Activated naive CD4-positive, alpha-beta T cell treated with anti-CD3 and anti-CD28 coated beads for 36 hours (primary cell): ENCODE measurements at regions of chrX and their contacts with region 1.

Region 1: GRCh38 chrX:45843518-45843917 is 642.8 kb upstream of the DIPK2B start:
- DNase-seq: peak; percentile 11
- H3K4me3 Mint-ChIP-seq: no peak overlapping the region
- H3K27ac Mint-ChIP-seq: peak overlapping the region; percentile 80
- H3K4me1 Mint-ChIP-seq: peaks cover 54% of the 10 kb centered on the region
- H3K27me3 Mint-ChIP-seq: no peaks in the 10 kb centered on the region

Region 2: DNA sequence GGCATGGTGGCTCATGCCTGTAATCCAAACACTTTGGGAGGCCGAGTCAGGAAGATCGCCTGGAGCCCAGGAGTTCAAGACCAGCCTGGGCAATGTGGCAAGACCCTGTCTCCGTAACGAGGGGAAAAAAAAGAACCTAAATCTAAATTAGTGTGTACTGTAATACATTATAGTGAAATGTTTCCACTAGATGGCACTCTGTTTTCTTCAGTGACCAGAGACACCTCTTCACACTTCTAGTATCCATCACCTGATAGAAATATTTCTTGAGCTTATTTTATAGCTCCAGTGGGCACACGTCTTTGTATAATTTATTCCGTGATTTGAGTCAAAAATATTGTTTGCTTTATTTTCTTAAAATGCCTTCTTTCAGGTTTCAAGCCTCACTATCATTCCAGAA is 42.0 kb before region 1 on chrX:
- CTCF ChIA-PET with region 1: no interaction called
- intact Hi-C with region 1: loop called (anchors 1 kb)
- DNase-seq: no peak
- H3K4me3 Mint-ChIP-seq: no peak overlapping the region
- H3K27ac Mint-ChIP-seq: peak overlapping the region; percentile 70
- H3K4me1 Mint-ChIP-seq: peaks cover 75% of the 10 kb centered on the region
- H3K27me3 Mint-ChIP-seq: no peaks in the 10 kb centered on the region

Region 3: DNA sequence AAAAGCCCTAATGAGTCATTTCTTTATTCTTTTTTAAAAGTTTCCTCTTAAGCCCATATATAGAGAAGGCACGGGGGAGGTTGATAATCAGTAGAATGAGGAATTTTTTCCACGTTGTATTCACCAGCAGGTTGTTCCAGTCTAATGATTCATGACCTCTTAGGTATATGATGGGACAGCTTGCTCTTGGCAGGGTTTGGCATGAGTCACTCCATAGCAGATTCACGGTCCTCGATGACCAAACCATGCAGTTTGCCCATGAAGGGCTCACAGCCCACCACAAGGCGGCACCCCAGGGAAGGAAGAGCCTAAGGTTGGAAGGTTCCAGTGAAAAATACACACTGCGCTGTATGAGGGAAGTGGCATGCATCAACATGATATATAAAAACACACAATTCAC is 19.0 kb before region 1 on chrX:
- CTCF ChIA-PET with region 1: interaction called, 3 read pairs
- intact Hi-C with region 1: loop called (anchors 2 kb)
- DNase-seq: peak; percentile 61
- H3K4me3 Mint-ChIP-seq: no peak overlapping the region
- H3K27ac Mint-ChIP-seq: peak overlapping the region; percentile 87
- H3K4me1 Mint-ChIP-seq: peaks cover 52% of the 10 kb centered on the region
- H3K27me3 Mint-ChIP-seq: no peaks in the 10 kb centered on the region

Region 4: GRCh38 chrX:45872480-45872879 is 29.0 kb after region 1 on chrX:
- CTCF ChIA-PET with region 1: no interaction called
- intact Hi-C with region 1: no loop called
- DNase-seq: peak; percentile 7
- H3K4me3 Mint-ChIP-seq: no peak overlapping the region
- H3K27ac Mint-ChIP-seq: no peak overlapping the region
- H3K4me1 Mint-ChIP-seq: peaks cover 5% of the 10 kb centered on the region
- H3K27me3 Mint-ChIP-seq: no peaks in the 10 kb centered on the region